HepG2 (cell line): ENCODE measurements at regions of chr2 and their contacts with region 1.

Region 1: DNA sequence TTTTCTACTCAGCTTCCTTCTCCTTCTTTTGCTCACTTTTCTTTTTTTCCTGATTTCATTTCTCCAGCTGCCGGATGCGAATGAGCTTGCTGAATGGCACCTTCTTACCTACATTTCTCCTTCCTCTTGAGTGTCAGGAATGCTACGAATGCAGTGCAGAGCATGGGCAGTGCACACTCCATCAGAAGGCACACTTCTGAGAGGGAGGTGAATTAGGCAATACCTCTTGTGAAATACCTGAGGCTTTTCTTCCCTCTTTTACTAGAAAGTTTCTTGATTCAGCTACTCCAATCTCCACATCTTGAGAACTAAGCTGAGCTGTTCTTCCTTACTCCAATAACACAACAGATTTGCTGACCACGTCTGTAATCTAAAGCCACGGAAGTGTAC is 51.1 kb downstream of the PLEKHM3 start:
- DNase-seq: no peak
- ATAC-seq: no peak
- H3K4me3 ChIP-seq: no peak overlapping the region
- H3K27ac ChIP-seq: no peak overlapping the region
- H3K4me1 ChIP-seq: peaks cover 28% of the 10 kb centered on the region
- H3K27me3 ChIP-seq: no peaks in the 10 kb centered on the region
- CTCF ChIP-seq: no peak
- EP300 ChIP-seq: no peak
- POLR2A ChIP-seq: no peak
- RAD21 ChIP-seq: no peak

Region 2: GRCh38 chr2:207939342-207940108 is 34.7 kb before region 1 on chr2:
- CTCF ChIA-PET with region 1: no interaction called
- POLR2A ChIA-PET with region 1: interaction called, 5 read pairs
- in situ Hi-C with region 1: no loop called
- intact Hi-C with region 1: loop called (anchors 2 kb)
- DNase-seq: no peak
- ATAC-seq: no peak
- H3K4me3 ChIP-seq: no peak overlapping the region
- H3K27ac ChIP-seq: no peak overlapping the region
- H3K4me1 ChIP-seq: peaks cover 54% of the 10 kb centered on the region
- H3K27me3 ChIP-seq: no peaks in the 10 kb centered on the region
- CTCF ChIP-seq: no peak
- EP300 ChIP-seq: no peak
- POLR2A ChIP-seq: no peak
- RAD21 ChIP-seq: no peak

Region 3: DNA sequence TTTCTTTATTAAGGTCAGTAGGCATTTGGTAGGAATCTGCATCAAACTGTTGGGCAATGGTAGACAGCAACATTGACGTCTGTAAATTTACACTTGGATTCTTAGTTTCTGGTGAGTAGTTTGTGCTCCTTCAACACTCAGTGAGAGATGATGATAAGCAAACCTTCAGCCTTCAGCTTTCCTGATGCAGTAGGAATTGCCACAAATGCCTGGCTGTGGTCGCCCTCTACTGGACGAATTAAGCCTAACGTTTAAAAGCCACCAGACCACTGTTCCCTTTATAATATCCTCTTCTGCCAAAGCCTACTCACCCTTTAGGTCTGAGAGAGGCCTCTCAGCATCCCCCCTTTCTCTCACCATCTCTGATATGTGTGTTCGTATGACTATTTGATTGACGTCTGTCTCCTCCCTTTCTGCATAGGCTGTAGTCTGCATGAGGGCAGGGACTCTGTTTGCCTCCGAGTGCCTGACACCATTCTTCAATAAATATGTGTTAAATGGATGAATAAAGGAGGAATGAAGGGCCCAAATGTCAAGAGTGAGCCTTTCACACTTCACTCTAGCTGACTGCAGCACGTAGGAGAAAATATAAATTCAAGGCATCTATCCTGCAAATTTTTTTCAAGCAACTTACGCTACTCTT is 98.2 kb after region 1 on chr2:
- CTCF ChIA-PET with region 1: interaction called, 3 read pairs
- POLR2A ChIA-PET with region 1: no interaction called
- in situ Hi-C with region 1: no loop called
- intact Hi-C with region 1: loop called (anchors 5 kb)
- DNase-seq: peak; percentile 63
- ATAC-seq: peak; percentile 93
- H3K4me3 ChIP-seq: no peak overlapping the region
- H3K27ac ChIP-seq: no peak overlapping the region
- H3K4me1 ChIP-seq: no peaks in the 10 kb centered on the region
- H3K27me3 ChIP-seq: peaks cover 0 to 22% of the 10 kb centered on the region in 2 experiments; a peak in 3 of 5 replicates
- CTCF ChIP-seq: peak; percentile 94
- EP300 ChIP-seq: no peak
- POLR2A ChIP-seq: no peak
- RAD21 ChIP-seq: peak; percentile 88